CD14-positive monocyte (primary cell): ENCODE measurements at regions of chr3 and their contacts with region 1.

Region 1: GRCh38 chr3:138915503-138916498 is 31.1 kb downstream of the FOXL2 start:
- DNase-seq: peak; percentile 87 to 93 (median 89)
- H3K4me3 ChIP-seq: peak overlapping the region; percentile 62 to 100 (median 79)
- H3K4me3 Mint-ChIP-seq: peak overlapping the region; percentile 85 to 94
- H3K27ac ChIP-seq: peak overlapping the region; percentile 76 to 92
- H3K27ac Mint-ChIP-seq: peak overlapping the region; percentile 87 to 97 (median 94)
- H3K4me1 ChIP-seq: peaks cover 13 to 17% of the 10 kb centered on the region in 2 donors
- H3K4me1 Mint-ChIP-seq: peaks cover 9% of the 10 kb centered on the region
- H3K27me3 ChIP-seq: no peaks in the 10 kb centered on the region
- H3K27me3 Mint-ChIP-seq: peaks cover 3 to 6% (median 5%) of the 10 kb centered on the region in 3 donors
- CTCF ChIP-seq: peak; percentile 89

Region 2: GRCh38 chr3:138594150-138594934 is 321.5 kb before region 1 on chr3 and contains the start of gene CEP70:
- intact Hi-C with region 1: loop called (anchors 5 kb)
- DNase-seq: peak; percentile 83 to 91 (median 90)
- H3K4me3 ChIP-seq: peak within 1 kb of the TSS; percentile 64 to 80 (median 64)
- H3K4me3 Mint-ChIP-seq: peak within 1 kb of the TSS; percentile 95 to 97
- H3K27ac ChIP-seq: peak within 1 kb of the TSS in 1 of 2 donors; percentile 7
- H3K27ac Mint-ChIP-seq: peak within 1 kb of the TSS; percentile 80 to 95 (median 86)
- H3K4me1 ChIP-seq: peaks cover 12 to 19% of the 10 kb centered on the region in 2 donors
- H3K4me1 Mint-ChIP-seq: peaks cover 14% of the 10 kb centered on the region
- H3K27me3 ChIP-seq: peaks cover 0 to 5% of the 10 kb centered on the region in 2 donors
- H3K27me3 Mint-ChIP-seq: peaks cover 0 to 14% (median 6%) of the 10 kb centered on the region in 3 donors
- CTCF ChIP-seq: peak; percentile 98
- polyA plus RNA-seq, gene CEP70: 0.11 TPM in 1 of 3 donors, not detected in the others

Region 3: DNA sequence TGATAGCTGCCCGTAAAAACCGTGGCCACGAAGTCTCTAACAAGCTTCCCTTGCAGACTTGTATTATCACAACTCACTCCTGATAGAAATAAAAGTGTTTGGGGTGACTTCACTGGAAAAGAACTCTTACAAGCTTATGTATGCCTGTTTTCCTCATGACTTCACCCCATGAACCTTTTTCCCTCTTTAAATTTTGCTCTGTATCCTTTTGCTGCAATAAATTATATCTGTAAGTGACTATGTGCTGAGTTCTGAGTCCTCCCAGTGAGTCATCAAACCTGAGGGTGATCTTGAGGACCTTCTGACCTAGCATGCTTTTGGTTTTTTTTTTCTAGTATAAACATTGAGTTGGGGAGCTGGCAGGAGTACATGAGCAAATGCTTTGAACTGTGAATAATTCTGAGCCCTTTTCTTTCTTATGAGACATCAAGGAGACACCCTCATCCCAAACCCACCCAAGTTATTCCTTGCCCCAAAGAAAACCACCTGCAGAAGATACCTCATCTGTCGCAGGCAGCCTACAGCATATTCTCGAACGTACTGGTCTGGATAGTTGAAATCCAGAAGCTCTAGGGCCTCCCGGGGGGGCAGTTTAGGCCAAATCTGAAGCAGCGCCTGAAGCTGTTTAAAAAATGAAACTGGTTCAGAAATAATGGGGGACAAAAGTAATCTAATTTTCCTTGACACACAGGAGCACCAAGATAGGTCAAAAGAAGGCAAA is 221.4 kb before region 1 on chr3:
- intact Hi-C with region 1: loop called (anchors 2 to 5 kb)
- DNase-seq: no peak
- H3K4me3 ChIP-seq: no peak overlapping the region
- H3K4me3 Mint-ChIP-seq: no peak overlapping the region
- H3K27ac ChIP-seq: no peak overlapping the region
- H3K27ac Mint-ChIP-seq: peak overlapping the region in 2 of 7 donors; percentile 61 to 70
- H3K4me1 ChIP-seq: no peaks in the 10 kb centered on the region
- H3K4me1 Mint-ChIP-seq: no peaks in the 10 kb centered on the region
- H3K27me3 ChIP-seq: no peaks in the 10 kb centered on the region
- H3K27me3 Mint-ChIP-seq: no peaks in the 10 kb centered on the region
- CTCF ChIP-seq: no peak

Region 4: GRCh38 chr3:138834359-138835212 is 81.2 kb before region 1 on chr3 and contains the start of gene PIK3CB:
- intact Hi-C with region 1: loop called (anchors 2 to 5 kb)
- DNase-seq: peak; percentile 70 to 84 (median 83)
- H3K4me3 ChIP-seq: peak within 1 kb of the TSS; percentile 79 to 93 (median 81)
- H3K4me3 Mint-ChIP-seq: peak within 1 kb of the TSS; percentile 84 to 98
- H3K27ac ChIP-seq: peak within 1 kb of the TSS; percentile 89 to 92
- H3K27ac Mint-ChIP-seq: peak within 1 kb of the TSS; percentile 90 to 98 (median 96)
- H3K4me1 ChIP-seq: peaks cover 25 to 26% of the 10 kb centered on the region in 2 donors
- H3K4me1 Mint-ChIP-seq: peaks cover 28% of the 10 kb centered on the region
- H3K27me3 ChIP-seq: no peaks in the 10 kb centered on the region
- H3K27me3 Mint-ChIP-seq: peaks cover 0 to 1% (median 0%) of the 10 kb centered on the region in 3 donors
- CTCF ChIP-seq: peak; percentile 29
- polyA plus RNA-seq, gene PIK3CB: 14.1 to 33.6 (median 20.4) TPM

Region 5: DNA sequence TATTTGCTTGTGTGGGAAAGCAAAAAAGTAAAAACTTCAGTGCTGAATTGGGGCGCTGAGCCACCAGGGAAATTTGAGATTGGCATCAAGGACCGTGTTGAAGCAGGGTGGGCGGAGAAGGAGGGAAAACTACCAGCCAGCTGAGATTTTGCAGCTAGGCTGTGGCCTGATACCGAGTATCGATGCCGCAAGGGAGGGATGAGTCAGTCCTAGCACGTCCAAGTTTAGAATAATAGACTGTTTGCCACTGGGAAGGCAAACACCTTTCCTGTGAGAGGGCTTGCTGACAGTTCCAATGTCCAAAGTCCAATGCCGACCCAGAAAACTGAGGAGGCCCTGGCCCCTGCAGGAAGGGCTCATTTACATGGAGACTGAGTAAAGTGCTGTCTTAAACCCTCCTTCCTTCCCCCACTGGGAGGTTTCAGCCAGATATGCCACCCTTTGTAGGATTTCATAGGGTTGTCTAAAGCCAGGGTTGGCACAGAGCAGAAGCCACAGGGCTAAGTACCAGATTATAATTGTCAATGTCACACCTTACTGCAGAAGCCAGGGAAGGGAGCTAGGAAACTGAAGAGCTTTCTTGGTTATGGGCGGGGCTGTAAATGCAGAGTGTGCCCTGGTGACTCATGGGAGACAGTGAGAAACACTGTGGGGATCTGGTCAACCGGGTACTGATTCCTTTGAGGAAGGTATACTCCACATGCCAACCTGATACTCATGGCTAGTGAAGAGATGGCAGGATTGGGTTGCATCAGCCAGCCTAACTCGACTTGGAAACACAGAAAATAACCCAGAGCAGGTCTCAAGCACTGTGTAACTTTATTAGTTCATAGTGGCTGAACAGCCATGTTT is 52.7 kb before region 1 on chr3:
- intact Hi-C with region 1: loop called in 1 of 2 experiments (anchors 5 kb)
- DNase-seq: peak; percentile 68 to 91 (median 89)
- H3K4me3 ChIP-seq: peak overlapping the region; percentile 26 to 66 (median 39)
- H3K4me3 Mint-ChIP-seq: peak overlapping the region; percentile 42 to 82
- H3K27ac ChIP-seq: peak overlapping the region; percentile 62 to 89
- H3K27ac Mint-ChIP-seq: peak overlapping the region; percentile 85 to 98 (median 91)
- H3K4me1 ChIP-seq: peaks cover 31 to 35% of the 10 kb centered on the region in 2 donors
- H3K4me1 Mint-ChIP-seq: peaks cover 35% of the 10 kb centered on the region
- H3K27me3 ChIP-seq: no peaks in the 10 kb centered on the region
- H3K27me3 Mint-ChIP-seq: peaks cover 0 to 2% (median 2%) of the 10 kb centered on the region in 3 donors
- CTCF ChIP-seq: no peak

Region 6: GRCh38 chr3:138888560-138888959 is 27.2 kb before region 1 on chr3:
- intact Hi-C with region 1: loop called in 1 of 2 experiments (anchors 2 kb)
- DNase-seq: peak; percentile 25 to 56 (median 30)
- H3K4me3 ChIP-seq: peak overlapping the region in 1 of 3 experiments; percentile 17
- H3K4me3 Mint-ChIP-seq: no peak overlapping the region
- H3K27ac ChIP-seq: peak overlapping the region; percentile 56 to 98
- H3K27ac Mint-ChIP-seq: peak overlapping the region; percentile 88 to 98 (median 94)
- H3K4me1 ChIP-seq: peaks cover 51 to 52% of the 10 kb centered on the region in 2 donors
- H3K4me1 Mint-ChIP-seq: peaks cover 47% of the 10 kb centered on the region
- H3K27me3 ChIP-seq: no peaks in the 10 kb centered on the region
- H3K27me3 Mint-ChIP-seq: peaks cover 0 to 2% (median 0%) of the 10 kb centered on the region in 3 donors
- CTCF ChIP-seq: no peak

Region 7: GRCh38 chr3:138985932-138986331 is 70.1 kb after region 1 on chr3:
- intact Hi-C with region 1: no loop called
- DNase-seq: no peak
- H3K4me3 ChIP-seq: no peak overlapping the region
- H3K4me3 Mint-ChIP-seq: no peak overlapping the region
- H3K27ac ChIP-seq: no peak overlapping the region
- H3K27ac Mint-ChIP-seq: no peak overlapping the region
- H3K4me1 ChIP-seq: no peaks in the 10 kb centered on the region
- H3K4me1 Mint-ChIP-seq: no peaks in the 10 kb centered on the region
- H3K27me3 ChIP-seq: no peaks in the 10 kb centered on the region
- H3K27me3 Mint-ChIP-seq: peaks cover 1 to 11% (median 8%) of the 10 kb centered on the region in 3 donors
- CTCF ChIP-seq: no peak

Region 8: DNA sequence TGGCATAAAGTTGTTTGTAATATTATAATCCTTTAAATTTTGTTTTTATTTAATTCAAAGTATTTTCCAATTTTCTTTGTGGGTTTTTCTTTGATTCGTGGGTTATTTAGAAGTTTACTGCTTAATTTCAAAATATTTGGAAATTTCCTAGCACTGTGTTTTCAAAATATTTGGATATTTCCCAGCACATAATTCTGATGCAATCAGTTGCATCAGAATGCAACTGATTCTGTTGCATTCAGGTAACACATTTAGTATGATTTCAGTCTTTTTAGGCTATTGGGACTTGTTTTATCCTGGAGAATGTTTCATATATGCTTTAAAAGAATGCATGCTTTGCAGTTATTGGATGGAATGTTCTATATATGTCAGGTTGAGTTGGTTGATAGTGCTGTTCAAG is 147.1 kb after region 1 on chr3:
- intact Hi-C with region 1: no loop called
- DNase-seq: no peak
- H3K4me3 ChIP-seq: no peak overlapping the region
- H3K4me3 Mint-ChIP-seq: no peak overlapping the region
- H3K27ac ChIP-seq: no peak overlapping the region
- H3K27ac Mint-ChIP-seq: no peak overlapping the region
- H3K4me1 ChIP-seq: no peaks in the 10 kb centered on the region
- H3K4me1 Mint-ChIP-seq: no peaks in the 10 kb centered on the region
- H3K27me3 ChIP-seq: no peaks in the 10 kb centered on the region
- H3K27me3 Mint-ChIP-seq: peaks cover 0 to 2% (median 0%) of the 10 kb centered on the region in 3 donors
- CTCF ChIP-seq: no peak